ENCODE measurements at regions of chr7 and their contacts with region 1.

Region 1: GRCh38 chr7:30308389-30308788 is 24.0 kb downstream of the ZNRF2 start:
- DNase-seq: peak; percentile 80
- ATAC-seq: peak; percentile 94
- H3K4me3 ChIP-seq: peak overlapping the region; percentile 49
- H3K27ac ChIP-seq: peak overlapping the region; percentile 48
- H3K4me1 ChIP-seq: peaks cover 32% of the 10 kb centered on the region
- H3K27me3 ChIP-seq: no peaks in the 10 kb centered on the region
- CTCF ChIP-seq: no peak

Region 2: DNA sequence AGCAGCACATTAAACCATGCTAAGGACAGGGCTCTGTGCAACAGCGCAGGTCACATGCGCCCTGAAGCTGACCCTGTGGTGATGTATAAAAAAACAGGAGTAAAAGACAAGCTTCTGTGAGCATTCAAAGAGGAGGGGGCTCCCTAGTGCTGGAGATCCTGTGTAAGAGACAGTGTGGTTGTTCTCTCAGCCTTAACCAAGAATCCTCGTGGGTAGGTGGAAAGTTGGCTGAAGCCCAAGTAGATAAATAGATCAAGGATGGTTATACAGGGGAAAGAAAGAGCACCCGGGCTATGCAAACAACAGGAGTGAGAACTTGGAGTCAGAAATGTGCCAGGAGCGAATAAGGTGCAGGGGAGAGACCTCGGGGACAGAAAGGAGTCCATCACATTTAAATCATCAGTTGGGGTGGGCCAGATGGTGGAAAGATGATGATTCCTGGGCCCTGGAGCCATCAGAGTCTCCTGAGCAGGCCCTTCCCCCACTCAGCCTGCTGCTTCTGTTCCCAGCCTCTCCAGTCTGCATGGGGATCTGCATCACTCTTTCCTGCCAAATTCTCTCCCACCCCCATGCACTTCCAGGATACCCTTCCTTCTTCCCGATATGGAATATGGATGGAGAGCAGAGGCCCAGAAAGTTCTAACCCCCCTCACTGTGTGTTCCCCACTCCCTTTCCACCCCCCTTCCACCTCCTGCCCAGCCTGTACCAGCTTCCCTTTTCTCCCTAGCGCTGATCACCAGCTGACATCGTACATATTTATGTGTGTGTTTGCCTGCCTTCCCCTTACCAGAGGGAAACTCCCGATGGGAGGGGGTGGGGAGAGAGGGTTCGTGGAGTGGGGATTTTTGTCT is 822.8 kb before region 1 on chr7:
- CTCF ChIA-PET with region 1: no interaction called
- POLR2A ChIA-PET with region 1: interaction called, 33 read pairs
- intact Hi-C with region 1: no loop called
- DNase-seq: no peak
- ATAC-seq: no peak
- H3K4me3 ChIP-seq: no peak overlapping the region
- H3K27ac ChIP-seq: no peak overlapping the region
- H3K4me1 ChIP-seq: peaks cover 13% of the 10 kb centered on the region
- H3K27me3 ChIP-seq: no peaks in the 10 kb centered on the region
- CTCF ChIP-seq: no peak

Measured in PC-3 (cell line).